OCI-LY7 (cell line): ENCODE measurements at regions of chr17 and their contacts with region 1.

Region 1: DNA sequence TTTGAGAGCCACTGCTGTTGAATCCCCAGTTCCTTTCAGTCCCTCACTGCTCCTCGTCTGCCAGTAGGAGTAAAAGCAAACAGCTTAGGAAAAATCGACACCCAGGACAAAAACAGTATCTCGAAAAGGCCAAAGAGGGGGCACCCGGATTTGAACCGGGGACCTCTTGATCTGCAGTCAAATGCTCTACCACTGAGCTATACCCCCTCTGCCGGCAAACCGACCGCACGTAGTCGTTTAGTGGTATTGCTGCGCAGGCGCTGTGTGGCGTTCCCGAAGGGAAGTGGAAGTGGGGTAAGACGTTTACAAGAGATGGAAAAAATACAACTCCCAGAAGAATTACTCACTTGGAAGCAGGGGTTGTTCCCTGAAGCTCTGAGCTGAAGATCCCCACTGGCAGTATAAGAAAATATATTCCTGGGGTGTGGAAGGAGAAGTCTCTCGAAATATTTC is 2.2 kb upstream of the PLXDC1 start:
- DNase-seq: peak; percentile 85
- H3K4me3 ChIP-seq: peak overlapping the region; percentile 76
- H3K27ac ChIP-seq: peak overlapping the region; percentile 65
- H3K4me1 ChIP-seq: peaks cover 11% of the 10 kb centered on the region
- CTCF ChIP-seq: no peak

Region 2: GRCh38 chr17:38752119-38752929 is 401.3 kb before region 1 on chr17 and contains the start of gene PSMB3:
- CTCF ChIA-PET with region 1: no interaction called
- POLR2A ChIA-PET with region 1: no interaction called
- intact Hi-C with region 1: loop called (anchors 5 kb)
- DNase-seq: peak; percentile 100
- H3K4me3 ChIP-seq: peak within 1 kb of the TSS; percentile 79
- H3K27ac ChIP-seq: peak within 1 kb of the TSS; percentile 76
- H3K4me1 ChIP-seq: peaks cover 40% of the 10 kb centered on the region
- CTCF ChIP-seq: no peak
- total RNA-seq, gene PSMB3: 290 and 348 TPM in 2 replicates

Region 3: DNA sequence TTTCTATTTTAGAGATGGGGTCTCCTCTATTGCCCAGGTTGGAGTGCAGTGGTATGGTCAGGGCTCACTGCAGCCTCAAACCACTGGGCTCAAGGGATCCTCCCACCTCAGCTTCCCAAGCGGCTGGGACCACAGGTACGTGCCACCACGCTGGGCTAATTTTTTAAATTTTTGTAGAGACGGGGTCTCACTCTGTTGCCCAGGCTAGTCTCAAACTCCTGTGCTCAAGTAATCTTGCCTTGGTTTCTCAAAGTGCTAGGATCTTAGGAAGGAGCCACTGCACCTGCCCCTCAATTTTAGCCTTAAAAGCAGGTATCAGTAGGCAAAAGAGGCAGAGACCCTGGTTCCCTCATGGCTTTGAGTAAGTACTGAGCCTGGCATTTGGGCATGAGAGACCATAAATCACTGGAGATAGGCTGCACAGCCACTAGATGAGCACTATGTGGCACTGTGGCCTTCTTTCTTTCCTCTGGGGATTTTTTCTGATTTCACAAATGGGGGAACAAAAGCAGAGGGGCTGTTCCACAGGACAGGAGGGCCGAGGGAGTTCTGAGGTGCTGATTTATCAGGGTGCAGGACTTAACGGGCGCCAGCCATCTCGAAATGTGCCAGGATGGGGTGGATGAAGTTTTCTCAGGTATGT is 84.4 kb before region 1 on chr17:
- CTCF ChIA-PET with region 1: no interaction called
- POLR2A ChIA-PET with region 1: no interaction called
- intact Hi-C with region 1: loop called (anchors 1 kb)
- DNase-seq: peak; percentile 76
- H3K4me3 ChIP-seq: no peak overlapping the region
- H3K27ac ChIP-seq: no peak overlapping the region
- H3K4me1 ChIP-seq: no peaks in the 10 kb centered on the region
- CTCF ChIP-seq: peak; percentile 85

Region 4: GRCh38 chr17:39174907-39175694 is 21.5 kb after region 1 on chr17:
- CTCF ChIA-PET with region 1: interaction called, 8 read pairs
- POLR2A ChIA-PET with region 1: interaction called, 8 read pairs
- intact Hi-C with region 1: loop called (anchors 2 kb)
- DNase-seq: peak; percentile 91
- H3K4me3 ChIP-seq: no peak overlapping the region
- H3K27ac ChIP-seq: peak overlapping the region; percentile 89
- H3K4me1 ChIP-seq: peaks cover 52% of the 10 kb centered on the region
- CTCF ChIP-seq: peak; percentile 94

Region 5: DNA sequence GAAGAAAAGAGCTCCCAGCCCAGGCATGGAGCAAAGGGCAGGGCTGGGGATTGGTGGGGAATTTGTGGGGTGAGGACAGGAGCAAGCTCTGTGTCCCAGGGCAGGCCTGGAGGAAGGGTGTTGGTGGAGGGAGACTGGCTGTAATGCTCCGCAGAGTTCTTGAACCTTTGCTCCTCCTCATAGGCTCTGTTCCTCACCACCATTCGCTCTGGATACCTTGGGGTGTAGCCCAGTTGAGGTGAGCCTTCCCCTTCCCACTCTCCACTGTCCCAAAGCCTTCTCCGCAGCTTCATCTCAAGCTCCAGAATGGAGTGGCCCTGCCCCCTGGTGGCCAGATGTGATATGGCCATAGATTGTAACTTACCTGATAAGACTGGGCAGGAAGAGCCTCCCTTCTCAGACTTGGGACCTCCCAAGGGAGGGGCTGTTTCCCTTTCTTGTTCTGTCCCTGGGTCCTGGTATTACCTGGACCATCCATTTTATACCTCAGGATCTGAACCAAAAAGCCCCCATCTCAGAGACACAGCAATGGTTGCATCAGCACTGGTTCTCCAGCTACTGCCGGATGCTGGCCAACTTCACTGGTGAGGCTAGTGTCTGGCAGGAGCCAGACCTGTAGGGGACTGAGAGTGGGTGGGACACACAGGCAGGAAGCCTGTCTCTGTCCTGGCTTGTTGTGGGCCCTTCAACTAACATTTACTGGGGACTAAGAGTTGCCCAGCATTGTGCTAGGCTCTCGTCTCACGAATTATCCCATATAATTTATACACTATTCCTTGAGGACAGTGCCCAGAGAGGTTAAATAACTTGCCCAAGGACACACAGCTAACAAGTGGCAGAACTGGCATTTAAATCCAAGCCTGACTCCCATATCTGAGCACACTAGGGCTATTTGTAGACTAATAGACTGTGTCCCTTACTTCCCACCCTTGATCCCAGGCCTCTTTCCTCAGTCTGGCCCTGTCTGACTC is 91.3 kb after region 1 on chr17:
- CTCF ChIA-PET with region 1: no interaction called
- POLR2A ChIA-PET with region 1: no interaction called
- intact Hi-C with region 1: loop called (anchors 1 kb)
- DNase-seq: peak; percentile 90
- H3K4me3 ChIP-seq: peak overlapping the region; percentile 23
- H3K27ac ChIP-seq: peak overlapping the region; percentile 59
- H3K4me1 ChIP-seq: peaks cover 53% of the 10 kb centered on the region
- CTCF ChIP-seq: peak; percentile 97

Region 6: GRCh38 chr17:39972271-39972670 is 818.6 kb after region 1 on chr17:
- CTCF ChIA-PET with region 1: no interaction called
- POLR2A ChIA-PET with region 1: no interaction called
- intact Hi-C with region 1: no loop called
- DNase-seq: no peak
- H3K4me3 ChIP-seq: no peak overlapping the region
- H3K27ac ChIP-seq: no peak overlapping the region
- H3K4me1 ChIP-seq: no peaks in the 10 kb centered on the region
- CTCF ChIP-seq: no peak